HCT116 (cell line): ENCODE measurements at regions of chr6 and their contacts with region 1.

Region 1: GRCh38 chr6:104143757-104144156 is 716.0 kb downstream of the HACE1 start:
- DNase-seq: no peak
- ATAC-seq: no peak
- H3K4me3 ChIP-seq: no peak overlapping the region
- H3K27ac ChIP-seq: no peak overlapping the region
- H3K4me1 ChIP-seq: no peaks in the 10 kb centered on the region
- H3K27me3 ChIP-seq: no peaks in the 10 kb centered on the region
- CTCF ChIP-seq: no peak
- POLR2A ChIP-seq: no peak
- RAD21 ChIP-seq: no peak

Region 2: DNA sequence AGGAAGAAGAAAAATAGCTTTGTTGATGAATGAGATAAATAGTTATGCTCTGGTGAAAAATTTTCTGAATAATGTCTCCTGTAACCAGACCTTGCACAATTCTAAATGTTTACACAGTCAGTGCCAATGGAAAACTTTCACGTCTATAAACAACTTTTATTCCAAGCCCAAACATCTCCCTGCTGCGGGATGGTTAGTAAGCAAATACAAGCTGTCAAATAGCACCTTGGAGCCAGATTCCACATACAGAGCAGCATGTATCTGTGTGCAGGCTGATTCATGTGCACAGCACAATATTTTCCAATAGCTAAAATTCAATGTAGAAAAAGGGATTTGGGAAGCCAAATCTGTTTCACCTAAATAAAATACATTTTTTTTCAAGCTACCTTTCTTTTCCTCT is 97.3 kb before region 1 on chr6:
- CTCF ChIA-PET with region 1: no interaction called
- POLR2A ChIA-PET with region 1: no interaction called
- RAD21 ChIA-PET with region 1: no interaction called
- intact Hi-C with region 1: no loop called
- DNase-seq: no peak
- ATAC-seq: no peak
- H3K4me3 ChIP-seq: no peak overlapping the region
- H3K27ac ChIP-seq: no peak overlapping the region
- H3K4me1 ChIP-seq: no peaks in the 10 kb centered on the region
- H3K27me3 ChIP-seq: no peaks in the 10 kb centered on the region
- CTCF ChIP-seq: no peak
- POLR2A ChIP-seq: no peak
- RAD21 ChIP-seq: no peak

Region 3: GRCh38 chr6:104130343-104130742 is 13.4 kb before region 1 on chr6:
- CTCF ChIA-PET with region 1: no interaction called
- POLR2A ChIA-PET with region 1: no interaction called
- RAD21 ChIA-PET with region 1: no interaction called
- intact Hi-C with region 1: loop called (anchors 1 kb)
- DNase-seq: no peak
- ATAC-seq: no peak
- H3K4me3 ChIP-seq: no peak overlapping the region
- H3K27ac ChIP-seq: no peak overlapping the region
- H3K4me1 ChIP-seq: no peaks in the 10 kb centered on the region
- H3K27me3 ChIP-seq: no peaks in the 10 kb centered on the region
- CTCF ChIP-seq: no peak
- POLR2A ChIP-seq: no peak
- RAD21 ChIP-seq: no peak